GM12878 (cell line): ENCODE measurements at regions of chr11 and their contacts with region 1.

Region 1: GRCh38 chr11:72102946-72103753 is at the start of gene LAMTOR1:
- DNase-seq: peak; percentile 97
- ATAC-seq: peak; percentile 97
- H3K4me3 ChIP-seq: peak within 1 kb of the TSS; percentile 94
- H3K27ac ChIP-seq: peak within 1 kb of the TSS; percentile 90
- H3K4me1 ChIP-seq: peaks cover 21% of the 10 kb centered on the region
- H3K27me3 ChIP-seq: no peaks in the 10 kb centered on the region
- CTCF ChIP-seq: peak; percentile 20 to 48 (median 40); a peak in 5 of 6 replicates
- EP300 ChIP-seq: peak in 1 of 2 experiments; percentile 17; a peak in 1 of 4 replicates
- POLR2A ChIP-seq: peak; percentile 94
- RAD21 ChIP-seq: no peak
- polyA plus RNA-seq, gene LAMTOR1: 85.1 to 126 TPM

Region 2: DNA sequence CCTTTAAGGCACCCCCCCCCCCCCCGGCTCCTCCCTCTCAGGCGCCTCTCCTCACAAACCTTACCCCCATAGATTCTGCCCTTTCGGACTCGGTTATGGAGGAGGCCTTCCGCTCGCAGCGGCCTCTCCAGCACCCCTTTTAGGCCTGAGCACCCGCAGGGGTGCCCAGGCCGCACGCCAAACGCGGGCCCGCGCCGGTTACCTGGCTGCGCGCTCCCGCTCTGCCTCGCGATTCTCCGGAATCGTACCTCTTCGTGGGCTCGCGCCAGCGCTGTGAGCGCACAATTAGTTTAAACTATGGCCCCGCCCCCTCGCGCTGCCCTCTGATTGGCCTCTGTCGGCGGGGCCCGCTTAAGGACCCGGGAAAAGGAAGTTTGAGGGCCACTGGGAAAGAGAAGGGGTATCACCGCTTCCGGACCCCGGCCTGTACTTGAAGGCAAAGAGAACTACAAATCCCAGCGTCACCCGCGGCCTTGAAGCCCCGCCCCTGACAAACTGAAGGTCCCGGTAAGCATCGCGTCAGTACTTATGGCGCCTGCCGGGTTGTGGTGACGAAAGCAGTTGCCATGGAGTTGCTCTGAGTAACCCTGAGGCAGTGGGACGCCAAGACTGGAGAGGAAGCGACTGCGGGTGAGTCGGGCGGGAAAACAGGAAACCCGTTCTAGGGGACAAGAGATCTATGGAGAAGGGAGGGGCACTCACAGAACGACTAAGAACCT is 22.7 kb before region 1 on chr11 and contains the starts of genes LRRC51 and NUMA1:
- CTCF ChIA-PET with region 1: interaction called, 6 read pairs
- POLR2A ChIA-PET with region 1: interaction called, 6 read pairs
- RAD21 ChIA-PET with region 1: interaction called, 4 read pairs
- SMC1A ChIA-PET with region 1: interaction called, 6 read pairs
- in situ Hi-C with region 1: no loop called
- intact Hi-C with region 1: loop called (anchors 1 kb)
- DNase-seq: peak; percentile 99
- ATAC-seq: peak; percentile 97
- H3K4me3 ChIP-seq: peak within 1 kb of the TSS; percentile 77
- H3K27ac ChIP-seq: peak within 1 kb of the TSS; percentile 78
- H3K4me1 ChIP-seq: peaks cover 16% of the 10 kb centered on the region
- H3K27me3 ChIP-seq: no peaks in the 10 kb centered on the region
- CTCF ChIP-seq: no peak
- EP300 ChIP-seq: no peak
- POLR2A ChIP-seq: peak; percentile 83
- RAD21 ChIP-seq: no peak
- polyA plus RNA-seq, gene LRRC51: 4.7 to 6.2 TPM
- polyA plus RNA-seq, gene NUMA1: 5.5 to 7.1 TPM